GM23248 (cell line): ENCODE measurements at regions of chr4 and their contacts with region 1.

Region 1: DNA sequence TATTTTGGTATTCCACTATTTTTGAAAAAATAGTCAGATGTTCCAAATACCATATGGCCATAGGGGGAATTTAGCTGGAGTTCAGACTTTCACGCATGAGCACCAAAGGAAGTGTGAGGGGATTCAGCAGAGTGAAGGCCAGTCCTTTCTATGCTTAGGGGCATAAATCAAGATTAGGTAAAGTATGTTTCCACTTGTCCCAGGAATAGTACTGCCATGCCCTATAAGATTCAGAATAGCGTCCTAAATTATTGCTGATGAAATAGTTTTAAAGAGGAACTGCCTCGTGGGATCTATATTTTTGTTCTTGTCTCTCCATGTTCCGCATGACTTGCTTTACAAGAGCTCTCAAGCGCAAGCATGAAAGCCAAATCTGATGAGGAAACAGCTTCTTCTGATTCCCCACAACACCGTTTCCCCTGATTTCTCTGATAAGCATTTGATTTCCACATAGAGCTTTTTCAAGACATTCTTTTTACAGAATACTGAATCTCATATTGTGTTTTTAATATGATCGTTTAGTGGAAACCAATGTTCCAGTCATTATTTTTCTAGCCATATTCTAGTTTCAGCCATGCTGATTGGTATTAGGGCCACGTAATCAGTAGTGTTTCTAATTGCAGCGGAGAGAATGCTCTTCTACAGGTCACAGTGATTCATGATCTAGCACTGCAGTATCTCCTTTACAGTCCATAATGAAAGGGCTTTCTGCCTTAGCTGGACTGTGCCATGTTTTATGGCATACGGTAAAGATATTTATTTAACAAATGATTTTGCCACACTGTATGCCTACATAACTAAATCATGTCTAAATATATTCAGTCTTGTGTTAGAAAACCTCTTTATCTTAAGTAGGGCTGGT is 492.3 kb downstream of the CENPC start:
- DNase-seq: no peak
- H3K4me3 ChIP-seq: no peak overlapping the region
- H3K27ac ChIP-seq: no peak overlapping the region
- H3K4me1 ChIP-seq: no peaks in the 10 kb centered on the region
- H3K27me3 ChIP-seq: no peaks in the 10 kb centered on the region

Region 2: DNA sequence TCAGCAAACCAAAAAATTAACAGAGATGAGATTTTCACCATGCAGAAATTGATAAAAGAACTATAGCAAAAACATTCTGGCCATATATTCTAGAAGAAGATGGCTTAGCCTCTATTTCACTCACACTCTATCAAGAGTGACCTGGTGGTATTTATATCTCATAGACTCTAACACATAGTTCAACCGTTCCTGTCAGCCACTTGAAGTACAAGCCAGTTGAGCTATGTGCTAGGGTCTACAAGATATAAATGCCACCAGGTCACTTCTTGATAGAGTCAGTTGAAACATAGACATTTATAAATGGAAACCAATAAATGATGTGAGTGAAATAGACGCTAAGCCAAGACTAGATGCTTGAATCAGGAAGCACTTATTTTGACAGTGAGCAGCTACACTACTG is 546.1 kb before region 1 on chr4:
- in situ Hi-C with region 1: no loop called
- DNase-seq: no peak
- H3K4me3 ChIP-seq: no peak overlapping the region
- H3K27ac ChIP-seq: no peak overlapping the region
- H3K4me1 ChIP-seq: no peaks in the 10 kb centered on the region
- H3K27me3 ChIP-seq: no peaks in the 10 kb centered on the region

Region 3: GRCh38 chr4:66972087-66972486 is 81.0 kb before region 1 on chr4:
- in situ Hi-C with region 1: loop called (anchors 25 kb)
- DNase-seq: no peak
- H3K4me3 ChIP-seq: no peak overlapping the region
- H3K27ac ChIP-seq: no peak overlapping the region
- H3K4me1 ChIP-seq: no peaks in the 10 kb centered on the region
- H3K27me3 ChIP-seq: no peaks in the 10 kb centered on the region

Region 4: DNA sequence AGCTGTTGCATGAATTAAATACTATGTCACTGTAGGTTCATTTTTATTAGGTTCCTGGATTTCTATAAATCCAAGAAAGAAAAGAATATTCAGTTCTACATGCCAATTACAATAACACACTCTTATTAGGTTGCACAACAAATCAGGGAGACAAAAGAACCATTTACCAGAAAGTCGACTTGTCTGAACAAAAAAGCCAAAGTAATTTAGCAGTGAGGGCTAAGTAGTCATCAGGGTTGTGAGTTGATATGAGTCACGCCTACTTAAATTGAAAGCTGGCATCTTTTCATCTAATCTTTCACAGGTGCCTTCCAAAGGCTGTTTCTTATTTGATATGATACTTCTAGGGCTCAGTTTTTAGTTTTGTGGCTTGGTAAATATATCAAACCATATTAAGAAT is 726.6 kb after region 1 on chr4:
- in situ Hi-C with region 1: no loop called
- DNase-seq: peak; percentile 45
- H3K4me3 ChIP-seq: no peak overlapping the region
- H3K27ac ChIP-seq: no peak overlapping the region
- H3K4me1 ChIP-seq: no peaks in the 10 kb centered on the region
- H3K27me3 ChIP-seq: no peaks in the 10 kb centered on the region

Region 5: GRCh38 chr4:68463804-68464203 is 1410.8 kb after region 1 on chr4:
- in situ Hi-C with region 1: no loop called
- DNase-seq: peak; percentile 13
- H3K4me3 ChIP-seq: no peak overlapping the region
- H3K27ac ChIP-seq: no peak overlapping the region
- H3K4me1 ChIP-seq: peaks cover 39% of the 10 kb centered on the region
- H3K27me3 ChIP-seq: no peaks in the 10 kb centered on the region